ENCODE measurements at regions of chr13 and their contacts with region 1.

Region 1: DNA sequence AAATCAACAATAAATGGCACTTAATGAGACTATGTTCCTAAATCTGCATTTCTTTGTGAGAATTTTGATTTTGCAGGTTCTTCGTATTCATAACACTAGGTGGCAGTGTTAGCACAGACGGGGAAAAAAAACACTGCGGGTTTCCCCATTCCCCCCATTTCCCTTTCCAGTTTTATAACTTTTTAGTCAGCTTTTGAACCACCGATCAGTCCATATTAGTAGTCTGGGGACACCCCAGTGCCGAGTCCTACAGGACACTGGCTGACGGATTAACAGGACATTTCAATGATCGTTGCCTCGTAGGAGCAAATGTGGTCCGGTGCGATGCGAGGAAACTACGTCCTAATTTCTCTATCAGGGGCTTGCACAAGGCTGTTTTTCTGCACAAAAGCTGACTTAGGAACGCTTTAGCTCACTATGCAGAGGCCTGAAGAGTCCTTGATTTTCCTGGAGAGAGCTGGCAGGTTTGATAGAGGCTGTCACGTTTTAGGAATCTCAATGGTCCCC is 234.3 kb downstream of the LMO7 start:
- DNase-seq: peak in 1 of 3 donors; percentile 45
- ATAC-seq: peak; percentile 31 to 44
- H3K4me3 ChIP-seq: peak overlapping the region; percentile 74
- H3K27ac ChIP-seq: no peak overlapping the region
- H3K4me1 ChIP-seq: no peaks in the 10 kb centered on the region
- H3K27me3 ChIP-seq: no peaks in the 10 kb centered on the region

Region 2: DNA sequence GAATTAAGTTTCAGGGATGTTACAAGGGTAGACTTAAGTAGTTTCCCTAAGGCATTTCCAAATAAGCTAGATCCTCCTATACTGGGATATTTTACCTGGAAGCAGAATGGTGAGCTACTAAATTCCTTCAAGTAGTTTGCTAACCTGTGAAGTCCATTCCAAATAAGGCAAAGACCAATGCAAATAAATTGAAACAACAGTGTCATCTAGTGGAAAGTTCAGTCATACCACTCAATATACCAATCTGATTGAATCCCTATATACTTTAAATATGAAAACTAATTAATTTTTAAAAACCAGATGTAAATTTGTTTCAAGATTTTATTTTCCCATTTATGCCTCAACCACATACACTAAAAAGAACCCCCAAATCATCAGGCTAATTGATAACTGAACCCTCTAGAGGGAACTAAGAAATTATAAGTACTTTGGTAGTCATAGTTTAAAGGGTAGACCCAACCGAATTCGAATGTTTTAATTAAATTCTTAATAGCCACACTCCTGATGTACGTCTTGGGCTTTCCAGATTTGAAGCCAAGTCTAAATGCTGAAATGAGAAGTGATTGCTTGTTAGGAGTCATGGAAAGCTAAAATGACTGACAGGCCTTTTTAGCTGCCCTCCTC is 612.2 kb before region 1 on chr13:
- intact Hi-C with region 1: no loop called
- DNase-seq: no peak
- ATAC-seq: peak in 1 of 2 donors; percentile 55
- H3K4me3 ChIP-seq: no peak overlapping the region
- H3K27ac ChIP-seq: no peak overlapping the region
- H3K4me1 ChIP-seq: no peaks in the 10 kb centered on the region
- H3K27me3 ChIP-seq: no peaks in the 10 kb centered on the region

Region 3: DNA sequence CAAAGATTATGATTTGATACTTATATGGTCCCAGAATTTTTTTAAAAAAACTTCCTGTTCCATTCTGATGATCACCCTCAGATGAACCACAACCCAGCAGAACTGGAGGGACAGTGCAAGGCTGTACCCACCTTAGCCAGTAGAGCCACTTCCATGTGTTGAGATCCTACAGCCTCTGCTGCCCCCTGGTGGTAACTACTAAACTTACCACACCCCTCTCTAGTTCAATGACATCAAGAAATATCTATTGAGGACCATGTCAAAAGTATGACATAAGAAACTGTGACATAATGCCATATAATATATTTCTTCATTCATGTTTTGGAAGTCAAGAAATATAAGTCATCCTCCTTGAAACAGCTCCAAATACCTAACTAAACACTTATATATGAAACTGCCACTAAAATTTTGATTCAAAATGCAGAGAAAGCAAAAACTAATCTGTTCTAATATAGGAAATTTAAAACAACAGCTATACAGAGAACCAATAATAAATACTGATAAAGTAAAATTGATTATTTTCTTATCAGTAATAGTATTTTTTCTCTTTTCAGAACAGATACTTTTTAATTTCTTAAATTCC is 603.2 kb after region 1 on chr13:
- intact Hi-C with region 1: loop called in 2 of 4 experiments (anchors 5 kb)
- DNase-seq: peak; percentile 58 to 68 (median 64)
- ATAC-seq: peak; percentile 94 to 97
- H3K4me3 ChIP-seq: no peak overlapping the region
- H3K27ac ChIP-seq: no peak overlapping the region
- H3K4me1 ChIP-seq: no peaks in the 10 kb centered on the region
- H3K27me3 ChIP-seq: no peaks in the 10 kb centered on the region

Measured in right cardiac atrium (tissue), 5 donors.